BJ (cell line): ENCODE measurements at regions of chr3 and their contacts with region 1.

Region 1: DNA sequence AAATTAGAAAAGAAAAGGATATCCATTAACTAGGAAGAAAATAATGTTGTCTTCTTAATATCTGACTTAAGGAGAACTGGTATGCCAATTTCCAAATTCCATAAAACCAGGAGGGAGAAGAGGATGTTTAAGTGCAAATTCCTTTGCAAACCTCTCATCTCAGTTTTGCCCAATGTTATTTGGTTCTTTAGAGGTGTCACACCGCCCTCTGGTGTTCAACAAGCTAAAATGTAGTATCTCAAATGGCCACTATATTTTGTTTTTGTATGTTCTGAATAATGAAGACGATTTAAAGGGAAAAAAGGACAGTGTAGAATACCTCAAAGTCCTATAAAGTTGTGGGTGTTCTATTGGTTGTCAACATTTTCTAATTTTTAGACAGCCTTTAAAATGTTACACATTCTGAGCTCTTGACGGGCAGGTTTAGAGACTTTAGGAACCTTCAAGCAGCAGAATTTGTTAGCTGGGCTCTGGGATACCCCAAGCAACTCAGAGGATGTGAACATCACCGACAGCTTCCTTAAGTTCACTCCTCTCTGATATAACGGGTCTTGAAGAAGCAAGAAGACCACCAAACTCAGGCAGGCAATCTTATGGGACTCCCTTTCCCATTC is 458.3 kb downstream of the MFSD1 start:
- DNase-seq: no peak
- H3K4me3 ChIP-seq: no peak overlapping the region
- H3K27me3 ChIP-seq: peaks cover 5% of the 10 kb centered on the region; the same call in 1 of the 2 replicates
- CTCF ChIP-seq: peak; percentile 67

Region 2: GRCh38 chr3:158801696-158802408 is 458.3 kb before region 1 on chr3 and contains the start of gene MFSD1:
- CTCF ChIA-PET with region 1: interaction called, 15 read pairs
- POLR2A ChIA-PET with region 1: no interaction called
- DNase-seq: peak; percentile 55
- H3K4me3 ChIP-seq: peak within 1 kb of the TSS; percentile 70
- H3K27me3 ChIP-seq: no peaks in the 10 kb centered on the region
- CTCF ChIP-seq: no peak
- polyA plus RNA-seq, gene MFSD1: 69.8 and 94.7 TPM in 2 replicates

Region 3: GRCh38 chr3:158845765-158846350 is 414.3 kb before region 1 on chr3:
- CTCF ChIA-PET with region 1: interaction called, 144 read pairs
- POLR2A ChIA-PET with region 1: no interaction called
- DNase-seq: no peak
- H3K4me3 ChIP-seq: no peak overlapping the region
- H3K27me3 ChIP-seq: no peaks in the 10 kb centered on the region
- CTCF ChIP-seq: peak; percentile 67

Region 4: GRCh38 chr3:158912188-158912587 is 348.0 kb before region 1 on chr3:
- CTCF ChIA-PET with region 1: interaction called, 67 read pairs
- POLR2A ChIA-PET with region 1: no interaction called
- DNase-seq: no peak
- H3K4me3 ChIP-seq: no peak overlapping the region
- H3K27me3 ChIP-seq: no peaks in the 10 kb centered on the region
- CTCF ChIP-seq: 0 out of 2 replicates have a peak, but pooled peaks have one; percentile 7

Region 5: GRCh38 chr3:158918008-158918407 is 342.1 kb before region 1 on chr3:
- CTCF ChIA-PET with region 1: interaction called, 67 read pairs
- POLR2A ChIA-PET with region 1: no interaction called
- DNase-seq: peak; percentile 41
- H3K4me3 ChIP-seq: no peak overlapping the region
- H3K27me3 ChIP-seq: no peaks in the 10 kb centered on the region
- CTCF ChIP-seq: peak; percentile 88

Region 6: GRCh38 chr3:159178209-159178897 is 81.8 kb before region 1 on chr3:
- CTCF ChIA-PET with region 1: no interaction called
- POLR2A ChIA-PET with region 1: no interaction called
- DNase-seq: no peak
- H3K4me3 ChIP-seq: no peak overlapping the region
- H3K27me3 ChIP-seq: peaks cover 5% of the 10 kb centered on the region
- CTCF ChIP-seq: no peak

Region 7: GRCh38 chr3:159513867-159514380 is 253.8 kb after region 1 on chr3:
- CTCF ChIA-PET with region 1: no interaction called
- POLR2A ChIA-PET with region 1: no interaction called
- DNase-seq: peak; percentile 30
- H3K4me3 ChIP-seq: no peak overlapping the region
- H3K27me3 ChIP-seq: no peaks in the 10 kb centered on the region
- CTCF ChIP-seq: no peak